ENCODE measurements at regions of chr1 and their contacts with region 1.

Region 1: GRCh38 chr1:30407865-30408580 is 315.4 kb downstream of the MATN1 start:
- DNase-seq: no peak
- H3K4me3 Mint-ChIP-seq: no peak overlapping the region
- H3K27ac Mint-ChIP-seq: no peak overlapping the region
- H3K4me1 Mint-ChIP-seq: no peaks in the 10 kb centered on the region
- H3K27me3 Mint-ChIP-seq: peaks cover 7% of the 10 kb centered on the region

Region 2: DNA sequence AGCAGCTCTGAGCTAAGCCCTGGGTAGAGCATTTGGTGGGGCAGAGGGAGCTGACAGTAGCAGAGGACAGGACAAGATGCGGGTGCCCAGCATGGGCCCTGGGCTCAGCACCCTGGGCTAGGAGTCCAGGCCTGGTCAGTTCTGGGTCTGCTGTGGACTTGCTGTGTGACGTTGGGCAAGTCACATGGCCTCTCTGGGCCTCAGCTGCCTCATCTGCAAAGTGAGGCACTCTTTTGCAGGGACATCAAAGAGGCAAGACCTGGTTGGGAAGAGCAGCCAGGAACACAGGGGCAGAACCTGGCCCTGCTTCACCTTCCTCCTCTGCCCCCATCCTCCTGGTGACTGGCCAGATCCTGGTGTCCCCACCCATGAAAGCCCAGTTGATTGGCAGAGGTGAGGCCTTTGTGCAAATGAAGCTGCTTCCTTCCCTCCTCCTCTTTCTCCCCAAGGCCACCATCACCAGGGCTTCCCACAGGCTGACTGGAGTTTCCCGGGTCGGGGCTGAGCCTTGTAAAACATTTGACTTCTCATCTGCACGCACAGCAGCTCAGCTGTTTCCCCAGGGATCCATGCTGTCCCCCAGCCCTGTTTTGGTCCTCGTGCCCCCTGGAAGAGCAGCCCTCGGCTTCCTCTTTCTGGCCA is 35.1 kb before region 1 on chr1:
- CTCF ChIA-PET with region 1: no interaction called
- intact Hi-C with region 1: no loop called
- DNase-seq: no peak
- H3K4me3 Mint-ChIP-seq: no peak overlapping the region
- H3K27ac Mint-ChIP-seq: no peak overlapping the region
- H3K4me1 Mint-ChIP-seq: no peaks in the 10 kb centered on the region
- H3K27me3 Mint-ChIP-seq: peaks cover 2% of the 10 kb centered on the region

Region 3: DNA sequence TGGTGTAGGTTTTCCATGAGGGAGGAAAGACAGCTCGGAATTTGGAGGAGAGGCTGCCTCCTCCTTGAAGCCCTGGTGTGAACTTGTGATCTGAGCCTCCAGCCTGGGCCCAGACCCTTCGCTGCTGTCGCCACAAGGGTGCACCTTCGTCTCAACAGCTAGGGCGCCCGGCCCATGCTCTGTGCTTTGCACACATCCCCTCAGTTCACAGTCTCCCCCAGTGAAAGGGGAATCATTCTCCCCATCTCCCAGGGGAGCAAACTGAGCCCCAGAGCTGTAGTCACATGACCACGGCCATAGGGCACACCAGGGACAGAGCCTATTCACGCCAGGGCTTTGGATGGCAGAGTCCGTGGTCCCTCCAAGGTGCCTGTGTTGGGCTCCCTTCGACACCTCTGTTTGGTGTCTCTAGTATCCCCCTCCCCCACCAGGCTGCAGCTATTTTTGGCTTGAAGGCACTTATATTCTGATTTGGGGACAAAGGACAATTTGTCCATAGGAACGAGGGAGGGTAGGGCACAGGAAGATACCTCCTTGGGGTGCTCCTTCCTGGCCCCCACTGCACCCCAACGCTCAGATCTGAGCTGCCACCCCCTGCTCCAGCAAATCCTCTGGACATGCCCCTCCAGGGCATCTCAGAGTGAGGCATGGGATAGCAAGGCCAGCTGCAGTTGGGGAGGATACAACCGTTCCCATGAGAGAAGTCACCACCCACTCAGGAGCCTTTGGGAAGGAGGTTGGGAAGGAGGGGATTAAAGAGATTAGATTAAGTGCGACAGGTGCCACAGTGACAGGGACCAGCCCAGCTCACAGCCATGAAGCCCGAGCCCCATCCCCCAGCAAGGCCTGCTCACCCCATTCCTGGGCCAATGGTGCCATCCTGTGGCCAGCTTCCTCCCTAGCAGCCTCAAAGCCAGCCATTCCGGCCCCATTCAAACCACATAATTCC is 299.7 kb after region 1 on chr1:
- CTCF ChIA-PET with region 1: interaction called, 3 read pairs
- intact Hi-C with region 1: loop called (anchors 1 kb)
- DNase-seq: peak; percentile 82
- H3K4me3 Mint-ChIP-seq: no peak overlapping the region
- H3K27ac Mint-ChIP-seq: no peak overlapping the region
- H3K4me1 Mint-ChIP-seq: no peaks in the 10 kb centered on the region
- H3K27me3 Mint-ChIP-seq: no peaks in the 10 kb centered on the region